ENCODE measurements at regions of chr7 and their contacts with region 1.

Region 1: DNA sequence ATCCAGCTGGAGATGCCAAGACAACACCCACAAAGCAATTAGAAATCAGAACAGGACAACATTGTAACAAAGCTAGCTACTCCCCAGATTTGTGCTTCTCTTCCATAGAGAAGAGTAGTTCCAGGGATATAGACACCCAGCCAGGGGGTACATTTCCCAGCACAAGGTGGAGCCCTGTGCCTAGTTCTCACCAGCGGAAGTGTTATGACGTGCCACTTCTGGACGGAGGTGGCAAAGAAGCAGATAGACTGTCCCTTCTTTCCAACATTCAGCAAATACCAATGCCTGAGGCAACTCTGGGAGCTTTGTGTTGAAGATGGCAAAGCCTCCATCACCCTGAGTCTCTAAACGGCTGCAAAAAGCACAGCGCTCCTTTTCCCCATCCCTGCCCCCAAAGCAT is 23.4 kb upstream of the GSAP start:
- DNase-seq: peak; percentile 76
- H3K4me3 Mint-ChIP-seq: no peak overlapping the region
- H3K27ac Mint-ChIP-seq: no peak overlapping the region
- H3K4me1 Mint-ChIP-seq: peaks cover 14% of the 10 kb centered on the region
- H3K27me3 Mint-ChIP-seq: no peaks in the 10 kb centered on the region
- CTCF ChIP-seq: peak; percentile 41

Region 2: DNA sequence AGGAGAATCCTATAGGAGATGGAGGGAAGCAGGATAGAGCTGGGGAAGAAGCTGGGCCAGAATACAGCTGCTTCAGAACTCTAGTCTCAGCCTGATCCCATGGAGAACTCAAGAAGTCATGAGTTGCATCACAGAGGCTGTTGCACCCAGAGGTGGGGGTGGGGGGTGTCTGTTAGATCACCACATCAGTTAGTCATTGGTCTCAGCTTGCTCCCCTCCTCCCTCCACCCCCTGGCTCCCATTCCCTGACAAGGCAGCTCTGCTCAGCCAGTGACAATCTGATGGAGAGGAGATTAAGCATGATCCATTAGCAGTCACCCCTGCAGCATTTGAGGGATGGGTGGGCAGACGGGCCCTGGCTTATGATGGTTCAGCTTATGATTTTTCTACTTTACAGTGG is 181.6 kb before region 1 on chr7:
- CTCF ChIA-PET with region 1: no interaction called
- POLR2A ChIA-PET with region 1: no interaction called
- intact Hi-C with region 1: no loop called
- DNase-seq: peak; percentile 11
- H3K4me3 Mint-ChIP-seq: no peak overlapping the region
- H3K27ac Mint-ChIP-seq: no peak overlapping the region
- H3K4me1 Mint-ChIP-seq: no peaks in the 10 kb centered on the region
- H3K27me3 Mint-ChIP-seq: no peaks in the 10 kb centered on the region
- CTCF ChIP-seq: no peak

Region 3: DNA sequence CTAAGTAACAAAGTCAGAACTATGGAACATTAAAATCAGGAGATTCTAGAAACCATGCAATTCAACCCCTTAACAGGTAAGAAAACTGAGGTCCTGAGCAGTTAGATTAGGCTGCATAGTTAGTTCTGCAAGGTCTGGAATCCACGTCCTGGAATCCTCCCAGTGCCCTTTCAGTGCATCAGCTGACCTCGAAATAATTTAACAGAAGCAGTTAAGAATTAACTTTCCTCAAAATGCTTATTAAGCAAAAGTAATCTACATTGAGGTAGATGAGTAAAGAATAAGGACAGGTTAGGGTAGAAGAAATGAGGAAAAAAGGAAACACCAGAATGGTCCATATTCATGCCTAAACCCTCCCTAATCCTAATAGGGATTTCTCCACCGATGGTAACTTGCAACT is 61.0 kb before region 1 on chr7:
- CTCF ChIA-PET with region 1: no interaction called
- POLR2A ChIA-PET with region 1: no interaction called
- intact Hi-C with region 1: no loop called
- DNase-seq: no peak
- H3K4me3 Mint-ChIP-seq: no peak overlapping the region
- H3K27ac Mint-ChIP-seq: no peak overlapping the region
- H3K4me1 Mint-ChIP-seq: peaks cover 7% of the 10 kb centered on the region
- H3K27me3 Mint-ChIP-seq: no peaks in the 10 kb centered on the region
- CTCF ChIP-seq: no peak

Region 4: GRCh38 chr7:77415823-77416622 is 23.5 kb before region 1 on chr7 and contains the start of gene GSAP:
- CTCF ChIA-PET with region 1: interaction called, 11 read pairs
- POLR2A ChIA-PET with region 1: interaction called, 3 read pairs
- intact Hi-C with region 1: no loop called
- DNase-seq: peak; percentile 61
- H3K4me3 Mint-ChIP-seq: peak within 1 kb of the TSS; percentile 66
- H3K27ac Mint-ChIP-seq: peak within 1 kb of the TSS; percentile 35
- H3K4me1 Mint-ChIP-seq: peaks cover 1% of the 10 kb centered on the region
- H3K27me3 Mint-ChIP-seq: no peaks in the 10 kb centered on the region
- CTCF ChIP-seq: no peak
- total RNA-seq, gene GSAP: 13.7 and 19.0 TPM in 2 replicates

Region 5: DNA sequence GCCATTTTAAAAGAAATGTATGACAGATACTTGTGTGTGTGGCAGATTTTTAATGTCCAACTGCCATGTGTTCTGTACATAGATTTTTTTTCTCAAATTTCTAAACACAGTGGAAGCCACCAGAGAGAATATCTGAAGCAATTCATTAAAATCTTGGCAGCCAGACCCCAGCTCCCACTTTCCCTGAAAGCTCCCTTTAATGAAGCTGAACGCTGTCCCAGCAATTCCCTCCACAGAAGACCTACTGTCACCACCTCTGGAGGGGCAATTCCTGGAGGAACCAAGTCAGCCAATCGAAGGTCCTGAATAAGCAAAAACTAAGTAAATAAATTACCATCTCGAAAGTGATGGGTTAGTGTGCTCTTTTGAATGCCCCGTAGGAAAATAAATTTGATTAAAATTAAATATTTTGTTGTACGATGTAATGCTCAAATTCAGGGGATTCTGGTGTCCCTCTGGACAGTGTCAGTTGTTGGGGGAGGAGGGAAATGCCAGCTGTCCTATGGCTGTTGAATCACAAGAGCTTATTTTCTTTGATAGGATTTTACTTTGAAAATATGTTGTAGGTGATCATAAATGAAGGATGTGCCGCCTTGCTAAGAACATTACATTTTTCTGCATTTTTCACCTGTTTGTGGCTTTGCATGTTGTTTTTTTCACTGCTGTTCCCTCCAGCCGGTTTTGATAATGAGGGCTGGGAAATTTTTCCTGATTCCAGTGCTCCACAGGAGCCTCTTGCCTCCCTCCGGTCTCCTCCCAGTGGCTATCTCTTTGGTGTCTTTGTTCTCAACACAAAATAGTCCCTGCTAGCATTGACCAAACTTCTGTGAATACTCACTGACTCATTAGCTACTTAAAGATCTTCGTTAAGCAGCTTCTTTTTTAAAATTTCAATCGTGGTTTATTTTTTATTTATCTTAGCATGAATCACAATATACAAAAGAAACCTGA is 14.2 kb before region 1 on chr7:
- CTCF ChIA-PET with region 1: interaction called, 15 read pairs
- POLR2A ChIA-PET with region 1: interaction called, 5 read pairs
- intact Hi-C with region 1: no loop called
- DNase-seq: peak; percentile 38
- H3K4me3 Mint-ChIP-seq: peak overlapping the region; percentile 40
- H3K27ac Mint-ChIP-seq: peak overlapping the region; percentile 44
- H3K4me1 Mint-ChIP-seq: peaks cover 19% of the 10 kb centered on the region
- H3K27me3 Mint-ChIP-seq: no peaks in the 10 kb centered on the region
- CTCF ChIP-seq: no peak

Region 6: DNA sequence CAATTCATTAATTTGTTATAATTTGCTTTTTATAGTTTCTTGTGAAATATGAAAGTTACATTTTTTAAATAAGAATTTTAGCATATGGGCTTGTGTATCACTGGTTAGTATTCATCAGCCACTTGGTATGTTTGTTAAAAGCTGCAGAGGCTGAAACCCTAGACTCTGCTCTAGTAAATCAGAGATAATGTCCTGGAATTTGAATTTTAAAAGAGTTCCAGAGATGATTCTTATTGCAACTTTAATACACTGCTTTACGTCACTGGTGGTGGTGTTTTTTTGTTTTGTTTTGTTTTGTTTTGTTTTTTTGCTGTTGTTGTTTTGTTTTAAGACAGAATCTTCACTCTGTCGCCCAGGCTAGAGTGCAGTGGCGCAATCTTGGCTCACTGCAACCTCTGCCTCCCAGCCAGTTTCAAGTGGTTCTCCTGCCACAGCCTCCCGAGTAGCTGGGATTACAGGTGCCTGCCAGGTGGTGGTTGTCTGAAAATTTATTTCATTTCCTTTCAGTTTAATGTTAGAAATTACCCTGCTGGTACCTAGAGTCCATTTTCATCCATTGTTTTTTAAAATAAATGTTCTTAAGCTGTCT is 141.3 kb after region 1 on chr7:
- CTCF ChIA-PET with region 1: interaction called, 4 read pairs
- POLR2A ChIA-PET with region 1: no interaction called
- intact Hi-C with region 1: loop called (anchors 5 kb)
- DNase-seq: peak; percentile 53
- H3K4me3 Mint-ChIP-seq: no peak overlapping the region
- H3K27ac Mint-ChIP-seq: peak overlapping the region; percentile 49
- H3K4me1 Mint-ChIP-seq: no peaks in the 10 kb centered on the region
- H3K27me3 Mint-ChIP-seq: no peaks in the 10 kb centered on the region
- CTCF ChIP-seq: no peak

Region 7: DNA sequence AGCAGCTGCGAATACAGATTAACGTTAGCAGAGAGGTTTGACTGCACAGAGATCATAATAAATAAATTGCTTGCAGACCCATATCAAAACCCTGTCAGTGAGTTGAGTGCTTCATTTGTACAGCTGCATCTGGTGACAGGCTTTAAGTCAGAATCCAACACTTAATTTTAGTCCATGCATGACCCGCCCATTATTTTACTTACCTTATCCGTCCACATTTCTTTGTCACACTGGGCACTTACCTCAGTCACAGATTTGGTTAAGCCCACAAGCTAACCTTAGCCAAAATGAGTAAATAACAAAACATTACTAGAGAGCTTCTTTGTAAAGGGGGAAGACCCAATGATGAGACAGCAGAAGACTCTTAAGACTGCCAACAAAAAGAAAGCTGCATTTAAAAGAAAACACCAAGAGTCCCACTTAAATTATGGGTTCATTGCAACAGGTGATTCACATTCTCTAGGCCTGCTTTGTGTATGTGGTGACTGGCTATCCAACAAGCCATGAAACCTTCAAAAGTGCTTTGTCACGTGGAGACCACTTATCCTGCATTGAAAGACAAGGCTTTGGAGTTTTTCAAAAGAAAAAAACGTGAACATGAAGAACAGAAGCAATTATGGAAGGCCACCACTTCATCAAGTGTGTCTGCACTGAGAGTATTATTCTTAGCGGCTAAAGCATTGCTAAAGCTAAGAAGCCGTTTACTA is 391.2 kb after region 1 on chr7:
- CTCF ChIA-PET with region 1: no interaction called
- POLR2A ChIA-PET with region 1: no interaction called
- intact Hi-C with region 1: no loop called
- DNase-seq: no peak
- H3K4me3 Mint-ChIP-seq: no peak overlapping the region
- H3K27ac Mint-ChIP-seq: no peak overlapping the region
- H3K4me1 Mint-ChIP-seq: peaks cover 18% of the 10 kb centered on the region
- H3K27me3 Mint-ChIP-seq: no peaks in the 10 kb centered on the region
- CTCF ChIP-seq: no peak